Activated CD8-positive, alpha-beta T cell treated with anti-CD3 and anti-CD28 coated beads, Interleukin-2, amount 10 ng/mL, durations not matched to agents 7 days and 5 days (primary cell): ENCODE measurements at regions of chr9 and their contacts with region 1.

Region 1: DNA sequence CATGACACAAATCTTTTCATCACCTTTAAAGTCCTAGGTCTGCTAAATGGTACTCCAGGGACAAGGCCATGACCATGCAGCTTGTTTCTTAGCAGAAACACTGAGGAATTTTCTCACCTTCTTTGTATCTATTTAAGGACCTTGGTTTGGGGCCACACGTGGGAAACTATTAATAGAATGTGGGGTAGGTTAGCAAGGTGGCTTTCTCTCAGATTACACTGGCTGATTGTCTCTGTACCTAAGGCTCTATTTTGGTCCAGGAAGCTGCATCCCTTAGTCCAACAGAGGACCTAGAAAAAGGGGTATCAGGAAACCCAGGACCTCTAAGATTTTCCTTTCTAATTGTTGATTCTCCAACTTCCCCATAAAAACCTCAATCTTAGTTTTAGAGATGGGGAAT is 36.3 kb upstream of the FRMD3 start:
- DNase-seq: no peak
- ATAC-seq: no peak
- H3K4me3 Mint-ChIP-seq: no peak overlapping the region
- H3K27ac Mint-ChIP-seq: no peak overlapping the region
- H3K4me1 Mint-ChIP-seq: no peaks in the 10 kb centered on the region
- H3K27me3 Mint-ChIP-seq: no peaks in the 10 kb centered on the region

Region 2: GRCh38 chr9:83596896-83597504 is 22.5 kb after region 1 on chr9:
- CTCF ChIA-PET with region 1: interaction called, 12 read pairs
- POLR2A ChIA-PET with region 1: no interaction called
- DNase-seq: peak; percentile 65
- ATAC-seq: peak; percentile 51
- H3K4me3 Mint-ChIP-seq: no peak overlapping the region
- H3K27ac Mint-ChIP-seq: no peak overlapping the region
- H3K4me1 Mint-ChIP-seq: no peaks in the 10 kb centered on the region
- H3K27me3 Mint-ChIP-seq: no peaks in the 10 kb centered on the region

Region 3: DNA sequence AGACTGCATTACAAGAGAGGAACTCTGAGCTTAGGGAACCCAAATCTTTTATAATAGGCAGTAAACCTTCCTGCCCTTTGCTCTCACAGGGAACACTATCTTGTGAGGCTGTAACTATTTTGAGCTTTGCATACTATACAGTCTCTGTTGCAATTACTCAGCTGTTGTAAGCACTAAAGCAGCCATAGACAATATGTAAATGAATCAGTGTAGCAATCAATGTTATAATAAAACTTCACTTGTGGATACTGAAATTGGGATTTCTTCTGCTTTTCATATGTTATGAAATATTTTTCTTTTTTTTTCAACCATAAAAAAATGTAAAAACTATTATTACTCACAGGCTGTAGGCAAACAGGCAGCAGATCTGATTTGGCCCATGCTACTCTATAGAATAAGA is 150.0 kb after region 1 on chr9:
- CTCF ChIA-PET with region 1: no interaction called
- POLR2A ChIA-PET with region 1: no interaction called
- DNase-seq: no peak
- ATAC-seq: no peak
- H3K4me3 Mint-ChIP-seq: no peak overlapping the region
- H3K27ac Mint-ChIP-seq: no peak overlapping the region
- H3K4me1 Mint-ChIP-seq: no peaks in the 10 kb centered on the region
- H3K27me3 Mint-ChIP-seq: peaks cover 2% of the 10 kb centered on the region